Activated CD4-positive, alpha-beta memory T cell treated with anti-CD3 and anti-CD28 coated beads for 36 hours (primary cell): ENCODE measurements at regions of chr2 and their contacts with region 1.

Region 1: GRCh38 chr2:143259368-143259958 is 130.2 kb downstream of the ARHGAP15 start:
- DNase-seq: peak; percentile 79
- H3K4me3 Mint-ChIP-seq: peak overlapping the region; percentile 63
- H3K27ac Mint-ChIP-seq: peak overlapping the region; percentile 89
- H3K4me1 Mint-ChIP-seq: peaks cover 85% of the 10 kb centered on the region
- H3K27me3 Mint-ChIP-seq: no peaks in the 10 kb centered on the region

Region 2: GRCh38 chr2:143110758-143111428 is 148.6 kb before region 1 on chr2:
- CTCF ChIA-PET with region 1: interaction called, 96 read pairs
- POLR2A ChIA-PET with region 1: no interaction called
- intact Hi-C with region 1: loop called (anchors 1 kb)
- DNase-seq: peak; percentile 70
- H3K4me3 Mint-ChIP-seq: peak overlapping the region; percentile 56
- H3K27ac Mint-ChIP-seq: peak overlapping the region; percentile 86
- H3K4me1 Mint-ChIP-seq: peaks cover 31% of the 10 kb centered on the region
- H3K27me3 Mint-ChIP-seq: no peaks in the 10 kb centered on the region

Region 3: DNA sequence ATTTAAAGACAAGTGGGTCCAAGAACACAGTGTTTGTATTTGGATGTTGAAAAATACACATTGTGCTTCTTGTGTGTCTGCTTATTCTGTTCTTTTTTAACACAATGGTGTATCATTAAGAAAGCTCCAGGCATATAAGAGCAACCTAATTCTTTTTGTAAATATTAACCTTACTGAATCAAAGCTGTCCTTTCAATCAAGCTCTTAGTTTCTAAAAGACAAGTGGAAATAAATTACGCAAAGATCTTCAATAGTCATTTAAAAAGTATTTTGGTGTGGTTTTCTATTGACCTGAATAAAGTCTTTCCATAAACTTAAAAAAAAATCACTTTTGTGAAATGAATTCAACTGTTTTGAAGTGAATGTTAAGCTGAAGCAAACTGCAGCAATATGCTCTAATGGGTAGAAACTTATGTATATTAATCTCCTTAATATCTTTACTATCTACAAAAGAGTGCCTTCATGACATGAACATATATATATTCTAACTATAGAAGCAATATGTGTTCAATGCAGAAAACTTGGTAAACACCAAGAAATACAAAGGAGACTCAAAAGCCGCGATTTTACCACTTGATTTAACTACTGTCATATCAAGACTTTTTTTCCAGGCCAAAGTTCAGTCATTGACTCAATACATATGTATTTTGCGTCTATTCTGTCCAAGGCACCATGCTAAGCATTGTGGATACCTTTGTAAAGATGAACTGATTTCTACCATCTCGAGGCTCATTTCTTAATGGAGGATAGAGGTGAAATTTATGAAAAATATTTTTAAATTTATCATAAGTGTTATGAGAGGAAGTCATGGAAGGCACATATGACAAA is 32.5 kb before region 1 on chr2:
- CTCF ChIA-PET with region 1: interaction called, 36 read pairs
- POLR2A ChIA-PET with region 1: no interaction called
- intact Hi-C with region 1: loop called (anchors 1 kb)
- DNase-seq: no peak
- H3K4me3 Mint-ChIP-seq: no peak overlapping the region
- H3K27ac Mint-ChIP-seq: no peak overlapping the region
- H3K4me1 Mint-ChIP-seq: peaks cover 38% of the 10 kb centered on the region
- H3K27me3 Mint-ChIP-seq: no peaks in the 10 kb centered on the region

Region 4: GRCh38 chr2:143375384-143375880 is 116.0 kb after region 1 on chr2:
- CTCF ChIA-PET with region 1: no interaction called
- POLR2A ChIA-PET with region 1: no interaction called
- intact Hi-C with region 1: no loop called
- DNase-seq: no peak
- H3K4me3 Mint-ChIP-seq: no peak overlapping the region
- H3K27ac Mint-ChIP-seq: no peak overlapping the region
- H3K4me1 Mint-ChIP-seq: peaks cover 25% of the 10 kb centered on the region
- H3K27me3 Mint-ChIP-seq: no peaks in the 10 kb centered on the region

Region 5: DNA sequence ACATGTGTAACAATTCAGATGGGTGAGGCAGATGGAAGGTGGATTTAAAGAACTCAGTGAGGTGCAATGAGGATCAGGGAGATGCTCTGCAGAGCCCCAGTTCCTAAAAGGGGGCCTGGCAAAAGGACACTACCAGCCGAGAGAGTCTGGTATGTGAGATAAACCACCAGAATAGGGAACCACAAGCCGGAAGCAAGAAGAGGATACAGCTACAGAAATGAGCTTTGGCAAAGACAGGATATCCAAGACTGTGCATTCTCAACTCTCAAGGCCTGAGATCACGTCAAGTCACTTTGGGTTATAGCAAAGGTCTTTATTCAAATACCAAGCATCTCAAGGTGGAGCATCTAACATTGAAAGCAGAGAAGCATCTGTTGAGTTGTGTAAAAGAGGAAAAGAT is 163.2 kb after region 1 on chr2:
- CTCF ChIA-PET with region 1: interaction called, 3 read pairs
- POLR2A ChIA-PET with region 1: no interaction called
- intact Hi-C with region 1: loop called (anchors 5 kb)
- DNase-seq: peak; percentile 15
- H3K4me3 Mint-ChIP-seq: no peak overlapping the region
- H3K27ac Mint-ChIP-seq: no peak overlapping the region
- H3K4me1 Mint-ChIP-seq: peaks cover 64% of the 10 kb centered on the region
- H3K27me3 Mint-ChIP-seq: no peaks in the 10 kb centered on the region

Region 6: GRCh38 chr2:143730155-143730952 is 470.9 kb after region 1 on chr2:
- CTCF ChIA-PET with region 1: no interaction called
- POLR2A ChIA-PET with region 1: no interaction called
- intact Hi-C with region 1: loop called (anchors 1 kb)
- DNase-seq: peak; percentile 46
- H3K4me3 Mint-ChIP-seq: no peak overlapping the region
- H3K27ac Mint-ChIP-seq: peak overlapping the region; percentile 67
- H3K4me1 Mint-ChIP-seq: peaks cover 61% of the 10 kb centered on the region
- H3K27me3 Mint-ChIP-seq: no peaks in the 10 kb centered on the region

Region 7: DNA sequence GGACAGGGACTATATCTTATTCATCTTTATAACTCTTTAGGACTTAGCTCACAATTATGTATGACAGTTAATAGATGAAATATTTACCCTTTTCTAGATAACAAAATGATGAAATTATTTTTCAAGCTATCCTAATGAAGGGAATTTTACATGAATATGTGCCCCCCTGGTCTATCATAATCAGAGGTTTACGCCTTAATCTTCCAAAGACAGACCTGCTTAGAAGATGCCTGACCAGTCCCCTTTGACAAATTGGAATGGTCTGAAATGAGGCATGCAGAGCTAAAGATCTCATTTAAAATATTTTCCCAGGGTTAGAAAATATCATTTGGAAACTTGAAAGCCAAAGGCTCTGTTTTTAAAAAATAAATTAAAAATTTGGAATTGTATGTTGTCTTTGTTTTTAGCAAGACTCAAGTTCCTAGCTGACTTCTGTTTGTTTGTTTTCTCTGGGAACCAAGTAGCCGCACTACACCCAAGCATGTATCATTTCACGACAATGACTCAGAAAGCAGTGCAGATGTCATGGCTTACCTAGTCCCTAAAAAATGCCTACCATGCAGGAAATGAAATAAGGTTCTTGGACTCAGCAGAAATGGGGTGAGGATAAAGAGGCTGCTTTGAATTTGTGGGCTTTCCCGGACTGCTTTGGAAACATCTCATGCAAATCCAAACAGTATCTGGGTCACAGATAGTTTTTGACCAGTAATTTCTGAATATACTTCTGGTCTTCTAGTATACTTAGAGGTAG is 1098.3 kb after region 1 on chr2:
- CTCF ChIA-PET with region 1: no interaction called
- POLR2A ChIA-PET with region 1: no interaction called
- intact Hi-C with region 1: loop called (anchors 2 kb)
- DNase-seq: peak; percentile 61
- H3K4me3 Mint-ChIP-seq: peak overlapping the region; percentile 12
- H3K27ac Mint-ChIP-seq: peak overlapping the region; percentile 88
- H3K4me1 Mint-ChIP-seq: peaks cover 26% of the 10 kb centered on the region
- H3K27me3 Mint-ChIP-seq: no peaks in the 10 kb centered on the region